Heart left ventricle (tissue), 16 donors: ENCODE measurements at regions of chr11 and their contacts with region 1.

Region 1: GRCh38 chr11:1714973-1715885 is 18.2 kb downstream of the KRTAP5-6 start:
- DNase-seq: peak in 4 of 5 donors; percentile 50 to 84 (median 59)
- ATAC-seq: peak; percentile 62 to 91 (median 88)
- H3K4me3 ChIP-seq: no peak overlapping the region
- H3K27ac ChIP-seq: peak overlapping the region in 1 of 12 donors; percentile 49
- H3K4me1 ChIP-seq: peaks cover 0 to 7% (median 0%) of the 10 kb centered on the region in 12 donors
- H3K27me3 ChIP-seq: peaks cover 0 to 6% (median 0%) of the 10 kb centered on the region in 9 donors
- CTCF ChIP-seq: no peak
- POLR2A ChIP-seq: no peak

Region 2: GRCh38 chr11:1749414-1750312 is 34.4 kb after region 1 on chr11:
- intact Hi-C with region 1: loop called in 1 of 10 experiments (anchors 5 kb)
- DNase-seq: no peak
- ATAC-seq: peak in 1 of 4 donors; percentile 1
- H3K4me3 ChIP-seq: peak overlapping the region in 11 of 12 donors; percentile 1 to 53 (median 44)
- H3K27ac ChIP-seq: peak overlapping the region in 2 of 12 donors; percentile 5 to 28
- H3K4me1 ChIP-seq: peaks cover 6 to 74% (median 40%) of the 10 kb centered on the region in 12 donors
- H3K27me3 ChIP-seq: peaks cover 0 to 13% (median 3%) of the 10 kb centered on the region in 9 donors
- CTCF ChIP-seq: no peak
- POLR2A ChIP-seq: no peak

Region 3: DNA sequence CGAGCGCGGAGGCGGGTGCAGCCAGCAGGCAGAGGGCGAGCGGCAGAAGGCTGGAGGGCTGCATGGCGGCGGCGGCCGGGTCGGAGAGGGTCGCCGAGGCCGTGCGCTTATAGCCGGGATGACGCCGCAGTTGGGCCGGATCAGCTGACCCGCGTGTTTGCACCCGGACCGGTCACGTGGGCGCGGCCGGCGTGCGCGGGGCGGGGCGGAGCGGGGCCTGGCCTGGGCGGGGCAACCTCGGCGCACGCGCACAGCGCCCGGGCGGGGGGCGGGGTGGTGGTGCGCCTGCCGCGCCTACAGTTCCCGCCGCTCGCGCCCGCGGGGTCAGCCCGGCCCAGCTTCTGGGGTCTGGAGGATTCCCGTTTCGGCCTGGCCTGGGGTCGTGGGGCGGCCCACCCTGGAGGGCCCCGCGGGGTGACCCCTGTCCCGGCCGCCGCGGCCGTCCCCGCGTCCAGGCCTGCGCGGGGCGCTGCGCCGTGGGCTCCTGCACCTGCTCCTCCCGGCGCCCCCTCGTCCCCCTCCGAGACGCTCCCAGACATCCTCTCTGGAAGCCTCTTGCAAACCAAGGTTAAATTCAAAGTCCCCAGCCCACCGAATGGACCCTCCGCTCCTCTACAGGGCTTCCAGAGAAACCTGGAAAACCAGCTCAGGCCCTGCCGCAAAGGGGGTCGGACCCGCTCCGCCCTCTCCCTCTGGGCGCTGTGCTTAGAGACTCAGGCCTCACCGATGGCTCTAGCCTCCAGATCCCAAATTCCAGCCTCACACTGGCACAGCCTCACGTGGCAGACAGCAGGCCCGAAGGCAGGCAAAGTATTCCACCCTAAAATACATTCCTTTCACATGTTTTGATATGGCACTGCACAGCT is 48.8 kb after region 1 on chr11 and contains the start of gene CTSD:
- intact Hi-C with region 1: loop called in 2 of 10 experiments (anchors 5 kb)
- DNase-seq: peak; percentile 91 to 97 (median 93)
- ATAC-seq: peak; percentile 51 to 84 (median 68)
- H3K4me3 ChIP-seq: peak within 1 kb of the TSS; percentile 80 to 100 (median 95)
- H3K27ac ChIP-seq: peak within 1 kb of the TSS; percentile 88 to 99 (median 98)
- H3K4me1 ChIP-seq: peaks cover 5 to 51% (median 48%) of the 10 kb centered on the region in 12 donors
- H3K27me3 ChIP-seq: no peaks in the 10 kb centered on the region
- CTCF ChIP-seq: peak in 3 of 12 donors; percentile 7 to 19 (median 10)
- POLR2A ChIP-seq: peak; percentile 12 to 83
- total RNA-seq, gene CTSD: 580 to 1,779 (median 722) TPM

Region 4: DNA sequence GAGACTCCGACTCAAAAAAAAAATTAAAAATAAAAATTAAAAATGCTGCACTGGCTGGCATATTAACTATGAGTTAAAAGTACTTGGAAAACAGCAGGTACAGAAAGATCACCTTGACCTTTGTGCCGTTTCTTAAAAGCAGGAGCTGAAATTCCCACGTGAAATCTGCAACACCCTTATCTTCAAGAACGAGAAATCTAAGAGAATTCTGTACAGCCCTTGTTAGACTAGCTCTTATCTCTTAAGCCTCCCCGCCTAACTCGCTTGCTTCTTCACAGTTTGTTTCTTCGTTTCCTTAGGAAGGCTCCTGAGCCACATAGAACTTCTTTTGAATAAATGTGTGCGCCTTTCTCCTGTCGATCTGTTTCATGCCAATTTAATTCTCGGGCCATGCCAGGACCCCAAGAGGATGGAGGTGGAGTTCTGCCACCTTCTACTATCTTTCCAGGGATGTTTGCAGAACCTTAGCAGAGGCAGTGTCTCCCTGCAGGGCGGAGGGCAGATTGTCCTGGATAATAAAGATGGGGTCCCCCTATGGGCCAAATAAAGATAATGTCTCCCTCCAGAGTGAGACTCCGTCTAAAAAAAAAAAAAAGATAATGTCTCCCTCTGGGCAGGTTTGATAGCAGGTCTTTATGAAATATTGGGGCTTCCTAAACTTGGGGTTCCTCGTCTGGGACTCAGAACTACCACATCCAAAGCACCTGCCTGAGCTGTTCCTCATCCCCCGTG is 92.2 kb after region 1 on chr11:
- intact Hi-C with region 1: loop called in 1 of 10 experiments (anchors 10 kb)
- DNase-seq: no peak
- ATAC-seq: no peak
- H3K4me3 ChIP-seq: no peak overlapping the region
- H3K27ac ChIP-seq: no peak overlapping the region
- H3K4me1 ChIP-seq: peaks cover 0 to 11% (median 0%) of the 10 kb centered on the region in 12 donors
- H3K27me3 ChIP-seq: peaks cover 0 to 54% (median 4%) of the 10 kb centered on the region in 9 donors
- CTCF ChIP-seq: no peak
- POLR2A ChIP-seq: no peak